ENCODE measurements at regions of chr5 and their contacts with region 1.

Region 1: DNA sequence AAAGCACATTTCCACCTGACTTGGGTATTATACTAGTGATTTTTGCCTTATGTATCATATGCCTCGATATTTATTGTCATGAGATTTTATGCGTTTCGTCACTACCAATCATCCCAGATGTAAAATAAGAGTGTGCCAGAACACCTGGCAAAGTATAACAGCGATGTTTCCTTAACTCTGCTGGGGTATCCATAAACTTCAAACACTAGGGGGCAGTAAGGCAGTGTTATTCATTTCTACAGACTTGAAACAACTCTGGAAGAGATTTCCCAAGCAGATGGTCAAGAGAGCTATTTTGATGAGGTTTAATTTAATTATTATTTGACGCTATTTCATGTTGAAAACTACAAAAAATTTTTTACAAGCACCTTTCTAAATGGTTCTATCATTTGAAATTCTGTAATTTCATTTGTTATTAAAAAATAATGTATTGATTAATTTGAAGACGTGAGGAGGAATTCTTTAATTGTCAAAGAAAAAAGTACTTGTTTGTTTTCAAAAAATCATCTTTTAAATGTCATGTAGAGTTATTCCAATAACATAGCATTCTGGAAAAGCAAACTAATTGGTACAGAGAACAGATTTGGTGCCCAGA is 388.5 kb upstream of the CTNND2 start:
- DNase-seq: no peak
- H3K4me3 ChIP-seq: no peak overlapping the region
- H3K4me3 Mint-ChIP-seq: no peak overlapping the region
- H3K27ac ChIP-seq: no peak overlapping the region
- H3K27ac Mint-ChIP-seq: no peak overlapping the region
- H3K4me1 ChIP-seq: no peaks in the 10 kb centered on the region
- H3K4me1 Mint-ChIP-seq: no peaks in the 10 kb centered on the region
- H3K27me3 ChIP-seq: no peaks in the 10 kb centered on the region
- H3K27me3 Mint-ChIP-seq: no peaks in the 10 kb centered on the region

Region 2: GRCh38 chr5:13478831-13479465 is 1186.2 kb after region 1 on chr5:
- CTCF ChIA-PET with region 1: no interaction called
- POLR2A ChIA-PET with region 1: no interaction called
- intact Hi-C with region 1: loop called (anchors 5 kb)
- DNase-seq: no peak
- H3K4me3 ChIP-seq: no peak overlapping the region
- H3K4me3 Mint-ChIP-seq: no peak overlapping the region
- H3K27ac ChIP-seq: no peak overlapping the region
- H3K27ac Mint-ChIP-seq: no peak overlapping the region
- H3K4me1 ChIP-seq: no peaks in the 10 kb centered on the region
- H3K4me1 Mint-ChIP-seq: no peaks in the 10 kb centered on the region
- H3K27me3 ChIP-seq: no peaks in the 10 kb centered on the region
- H3K27me3 Mint-ChIP-seq: no peaks in the 10 kb centered on the region